Panc1 (cell line): ENCODE measurements at regions of chr2 and their contacts with region 1.

Region 1: GRCh38 chr2:190036071-190036470 is 26.5 kb downstream of the MSTN start:
- DNase-seq: no peak
- ATAC-seq: no peak
- H3K4me3 ChIP-seq: no peak overlapping the region
- H3K27ac ChIP-seq: no peak overlapping the region
- H3K4me1 ChIP-seq: no peaks in the 10 kb centered on the region
- H3K27me3 ChIP-seq: peaks cover 3% of the 10 kb centered on the region; the same call in 1 of the 2 replicates
- CTCF ChIP-seq: no peak

Region 2: DNA sequence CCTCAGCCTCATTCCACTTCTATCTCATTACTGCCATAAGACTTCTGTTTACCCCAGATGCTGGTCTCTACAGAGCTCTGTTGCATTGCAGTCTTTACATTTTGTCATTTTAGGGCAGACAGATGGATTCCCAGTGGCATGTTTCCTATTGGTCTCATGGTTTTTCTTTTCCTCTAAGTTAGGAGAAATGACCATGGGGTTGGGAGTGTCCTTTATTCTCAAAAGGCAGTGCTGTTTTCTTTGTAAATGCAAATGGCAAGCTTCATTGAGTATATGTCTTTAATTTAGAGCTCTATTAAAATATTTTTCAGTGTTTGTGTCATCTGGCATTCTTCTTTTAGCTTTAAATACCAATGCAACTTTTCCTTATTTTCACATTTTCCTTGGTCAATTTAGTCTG is 30.6 kb before region 1 on chr2:
- CTCF ChIA-PET with region 1: no interaction called
- POLR2A ChIA-PET with region 1: interaction called, 13 read pairs
- in situ Hi-C with region 1: no loop called
- intact Hi-C with region 1: no loop called
- DNase-seq: no peak
- ATAC-seq: no peak
- H3K4me3 ChIP-seq: no peak overlapping the region
- H3K27ac ChIP-seq: no peak overlapping the region
- H3K4me1 ChIP-seq: no peaks in the 10 kb centered on the region
- H3K27me3 ChIP-seq: no peaks in the 10 kb centered on the region
- CTCF ChIP-seq: no peak

Region 3: GRCh38 chr2:190159453-190159852 is 123.4 kb after region 1 on chr2:
- CTCF ChIA-PET with region 1: no interaction called
- POLR2A ChIA-PET with region 1: no interaction called
- in situ Hi-C with region 1: no loop called
- intact Hi-C with region 1: no loop called
- DNase-seq: no peak
- ATAC-seq: no peak
- H3K4me3 ChIP-seq: no peak overlapping the region
- H3K27ac ChIP-seq: no peak overlapping the region
- H3K4me1 ChIP-seq: no peaks in the 10 kb centered on the region
- H3K27me3 ChIP-seq: no peaks in the 10 kb centered on the region
- CTCF ChIP-seq: no peak

Region 4: GRCh38 chr2:190468814-190469569 is 432.9 kb after region 1 on chr2:
- CTCF ChIA-PET with region 1: no interaction called
- POLR2A ChIA-PET with region 1: no interaction called
- in situ Hi-C with region 1: no loop called
- intact Hi-C with region 1: no loop called
- DNase-seq: peak; percentile 25
- ATAC-seq: peak; percentile 48; the same call in 1 of the 2 replicates
- H3K4me3 ChIP-seq: no peak overlapping the region
- H3K27ac ChIP-seq: no peak overlapping the region
- H3K4me1 ChIP-seq: peaks cover 3% of the 10 kb centered on the region; the same call in 1 of the 2 replicates
- H3K27me3 ChIP-seq: no peaks in the 10 kb centered on the region
- CTCF ChIP-seq: no peak